ENCODE measurements at regions of chr11 and their contacts with region 1.

Region 1: GRCh38 chr11:129386795-129387397 is 11.2 kb downstream of the BARX2 start:
- DNase-seq: no peak
- ATAC-seq: no peak
- H3K4me3 ChIP-seq: no peak overlapping the region
- H3K4me3 Mint-ChIP-seq: no peak overlapping the region
- H3K27ac ChIP-seq: no peak overlapping the region
- H3K27ac Mint-ChIP-seq: no peak overlapping the region
- H3K4me1 ChIP-seq: no peaks in the 10 kb centered on the region
- H3K4me1 Mint-ChIP-seq: no peaks in the 10 kb centered on the region
- H3K27me3 ChIP-seq: no peaks in the 10 kb centered on the region
- H3K27me3 Mint-ChIP-seq: peaks cover 22 to 65% (median 49%) of the 10 kb centered on the region in 5 donors

Region 2: GRCh38 chr11:129346916-129347315 is 40.0 kb before region 1 on chr11:
- CTCF ChIA-PET with region 1: no interaction called
- POLR2A ChIA-PET with region 1: no interaction called
- intact Hi-C with region 1: loop called in 1 of 2 experiments (anchors 1 kb)
- DNase-seq: no peak
- ATAC-seq: no peak
- H3K4me3 ChIP-seq: no peak overlapping the region
- H3K4me3 Mint-ChIP-seq: no peak overlapping the region
- H3K27ac ChIP-seq: no peak overlapping the region
- H3K27ac Mint-ChIP-seq: no peak overlapping the region
- H3K4me1 ChIP-seq: no peaks in the 10 kb centered on the region
- H3K4me1 Mint-ChIP-seq: peaks cover 0 to 6% (median 0%) of the 10 kb centered on the region in 7 donors
- H3K27me3 ChIP-seq: no peaks in the 10 kb centered on the region
- H3K27me3 Mint-ChIP-seq: peaks cover 0 to 13% (median under 1%) of the 10 kb centered on the region in 5 donors

Measured in naive thymus-derived CD4-positive, alpha-beta T cell (primary cell).